H1 (cell line): ENCODE measurements at regions of chr1 and their contacts with region 1.

Region 1: DNA sequence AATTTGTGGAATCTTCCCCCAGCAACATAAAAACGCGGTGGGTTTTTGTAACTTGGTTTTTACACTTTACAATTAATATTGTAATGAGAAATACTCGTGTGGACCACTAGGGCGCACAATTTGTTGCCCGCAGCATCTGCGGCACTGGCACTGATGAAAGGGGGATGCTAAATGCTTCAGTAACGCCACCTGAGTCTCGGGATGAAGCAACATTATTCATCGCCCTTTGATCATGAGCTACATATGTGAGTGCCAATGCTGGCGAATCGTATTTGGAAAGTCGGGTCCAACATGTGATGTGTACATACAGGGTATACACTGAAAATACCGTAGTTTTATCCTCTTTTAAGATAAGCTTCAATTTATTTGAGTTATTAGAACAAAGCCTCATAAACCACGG is 34.2 kb upstream of the COX20 start:
- DNase-seq: no peak
- H3K4me3 ChIP-seq: no peak overlapping the region
- H3K27ac ChIP-seq: no peak overlapping the region
- H3K4me1 ChIP-seq: peaks cover 0 to 5% (median 0%) of the 10 kb centered on the region in 4 experiments; a peak in 1 of 7 replicates
- H3K27me3 ChIP-seq: no peaks in the 10 kb centered on the region
- CTCF ChIP-seq: peak; percentile 48 to 67 (median 61)
- EP300 ChIP-seq: no peak
- POLR2A ChIP-seq: no peak
- RAD21 ChIP-seq: peak; percentile 66 to 76

Region 2: DNA sequence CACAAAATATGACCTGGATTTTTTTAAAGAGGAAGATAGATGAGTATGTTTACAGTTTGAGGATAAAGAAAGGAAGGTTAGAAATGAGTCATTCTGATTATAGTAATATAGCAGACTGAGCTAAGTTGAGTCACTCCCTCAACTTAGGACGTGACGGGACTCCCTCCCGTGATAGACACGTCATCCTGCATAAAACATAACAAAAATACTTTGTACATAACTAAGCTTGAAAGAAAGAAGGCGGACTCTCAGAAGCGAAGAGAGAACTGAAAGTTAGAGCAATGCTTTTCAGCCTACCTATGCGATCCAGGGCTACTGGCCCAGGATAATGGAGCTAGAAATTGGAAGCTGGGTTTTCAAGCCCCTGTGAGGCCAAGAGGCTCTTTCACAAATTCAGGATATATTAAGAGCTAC is 201.3 kb before region 1 on chr1:
- CTCF ChIA-PET with region 1: interaction called, 64 read pairs
- POLR2A ChIA-PET with region 1: interaction called, 3 read pairs
- DNase-seq: no peak
- H3K4me3 ChIP-seq: no peak overlapping the region
- H3K27ac ChIP-seq: no peak overlapping the region
- H3K4me1 ChIP-seq: no peaks in the 10 kb centered on the region
- H3K27me3 ChIP-seq: no peaks in the 10 kb centered on the region
- CTCF ChIP-seq: no peak
- EP300 ChIP-seq: no peak
- POLR2A ChIP-seq: no peak
- RAD21 ChIP-seq: no peak

Region 3: GRCh38 chr1:244735404-244735803 is 65.8 kb before region 1 on chr1:
- CTCF ChIA-PET with region 1: interaction called, 19 read pairs
- POLR2A ChIA-PET with region 1: no interaction called
- DNase-seq: no peak
- H3K4me3 ChIP-seq: no peak overlapping the region
- H3K27ac ChIP-seq: peak overlapping the region; percentile 79
- H3K4me1 ChIP-seq: peaks cover 1 to 16% (median 6%) of the 10 kb centered on the region in 4 experiments
- H3K27me3 ChIP-seq: peaks cover 0 to 7% (median 3%) of the 10 kb centered on the region in 4 experiments; a peak in 5 of 7 replicates
- CTCF ChIP-seq: no peak
- EP300 ChIP-seq: no peak
- POLR2A ChIP-seq: no peak; a peak in 1 of 3 replicates
- RAD21 ChIP-seq: no peak

Region 4: DNA sequence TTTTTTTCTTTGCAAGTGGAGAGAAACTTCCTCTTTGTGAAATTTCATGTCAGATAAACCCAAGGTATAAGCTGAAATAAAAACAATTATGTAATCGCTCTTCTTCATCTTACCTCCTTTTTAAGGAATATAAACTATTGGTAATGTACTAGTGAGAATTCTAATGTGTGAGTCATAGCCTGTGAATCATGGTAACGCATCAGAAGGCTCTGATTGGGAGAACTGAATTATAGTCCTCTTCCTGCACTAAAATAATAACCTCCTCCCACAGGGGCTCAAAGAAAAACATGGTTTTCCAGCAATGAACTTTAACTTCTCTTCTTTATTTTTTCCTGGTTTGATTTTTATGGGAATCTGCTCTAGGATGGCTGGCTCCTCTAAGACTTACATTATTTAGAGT is 22.9 kb before region 1 on chr1:
- CTCF ChIA-PET with region 1: interaction called, 16 read pairs
- POLR2A ChIA-PET with region 1: no interaction called
- DNase-seq: no peak
- H3K4me3 ChIP-seq: no peak overlapping the region
- H3K27ac ChIP-seq: no peak overlapping the region
- H3K4me1 ChIP-seq: no peaks in the 10 kb centered on the region
- H3K27me3 ChIP-seq: no peaks in the 10 kb centered on the region
- CTCF ChIP-seq: no peak
- EP300 ChIP-seq: no peak
- POLR2A ChIP-seq: no peak
- RAD21 ChIP-seq: no peak

Region 5: DNA sequence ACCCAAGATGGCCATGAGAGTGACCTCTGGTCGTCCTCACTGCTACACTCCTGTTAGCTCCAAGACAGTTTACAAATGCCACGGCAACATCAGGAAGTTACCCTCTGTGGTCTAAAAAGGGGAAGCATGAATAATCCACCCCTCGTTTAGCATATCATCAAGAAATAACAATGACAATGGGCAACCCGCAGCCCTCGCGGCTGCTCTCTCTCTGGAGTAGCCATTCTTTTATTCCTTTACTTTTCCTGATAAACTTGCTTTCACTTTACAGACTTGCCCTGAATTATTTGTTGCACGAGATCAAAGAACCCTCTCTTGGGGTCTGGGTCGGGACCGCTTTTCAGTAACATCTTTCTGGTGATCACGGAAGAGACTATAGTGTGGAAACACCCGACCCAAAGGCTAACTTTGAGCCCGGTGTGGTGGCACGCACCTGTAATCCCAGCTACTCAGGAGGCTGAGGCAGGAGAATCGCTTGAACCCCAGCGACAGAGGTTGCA is 14.4 kb after region 1 on chr1:
- CTCF ChIA-PET with region 1: interaction called, 50 read pairs
- POLR2A ChIA-PET with region 1: interaction called, 17 read pairs
- DNase-seq: peak in 1 of 2 experiments; percentile 64
- H3K4me3 ChIP-seq: peak overlapping the region; percentile 16 to 59 (median 40)
- H3K27ac ChIP-seq: peak overlapping the region; percentile 69
- H3K4me1 ChIP-seq: peaks cover 1 to 11% (median 7%) of the 10 kb centered on the region in 4 experiments
- H3K27me3 ChIP-seq: no peaks in the 10 kb centered on the region
- CTCF ChIP-seq: no peak
- EP300 ChIP-seq: peak in 1 of 2 experiments; percentile 32; a peak in 1 of 3 replicates
- POLR2A ChIP-seq: peak; percentile 50 to 55
- RAD21 ChIP-seq: no peak

Region 6: GRCh38 chr1:244835276-244836134 is 34.3 kb after region 1 on chr1 and contains the start of gene COX20:
- CTCF ChIA-PET with region 1: interaction called, 10 read pairs
- POLR2A ChIA-PET with region 1: interaction called, 39 read pairs
- DNase-seq: peak; percentile 70 to 94
- H3K4me3 ChIP-seq: peak within 1 kb of the TSS; percentile 75 to 87 (median 81)
- H3K27ac ChIP-seq: peak within 1 kb of the TSS; percentile 100
- H3K4me1 ChIP-seq: peaks cover 0 to 3% (median under 1%) of the 10 kb centered on the region in 4 experiments; a peak in 4 of 7 replicates
- H3K27me3 ChIP-seq: no peaks in the 10 kb centered on the region
- CTCF ChIP-seq: no peak
- EP300 ChIP-seq: no peak; a peak in 1 of 3 replicates
- POLR2A ChIP-seq: peak; percentile 66 to 94
- RAD21 ChIP-seq: peak in 1 of 2 experiments; percentile 12; a peak in 1 of 4 replicates
- total RNA-seq, gene COX20: 28.8 and 33.6 TPM in 2 replicates

Region 7: DNA sequence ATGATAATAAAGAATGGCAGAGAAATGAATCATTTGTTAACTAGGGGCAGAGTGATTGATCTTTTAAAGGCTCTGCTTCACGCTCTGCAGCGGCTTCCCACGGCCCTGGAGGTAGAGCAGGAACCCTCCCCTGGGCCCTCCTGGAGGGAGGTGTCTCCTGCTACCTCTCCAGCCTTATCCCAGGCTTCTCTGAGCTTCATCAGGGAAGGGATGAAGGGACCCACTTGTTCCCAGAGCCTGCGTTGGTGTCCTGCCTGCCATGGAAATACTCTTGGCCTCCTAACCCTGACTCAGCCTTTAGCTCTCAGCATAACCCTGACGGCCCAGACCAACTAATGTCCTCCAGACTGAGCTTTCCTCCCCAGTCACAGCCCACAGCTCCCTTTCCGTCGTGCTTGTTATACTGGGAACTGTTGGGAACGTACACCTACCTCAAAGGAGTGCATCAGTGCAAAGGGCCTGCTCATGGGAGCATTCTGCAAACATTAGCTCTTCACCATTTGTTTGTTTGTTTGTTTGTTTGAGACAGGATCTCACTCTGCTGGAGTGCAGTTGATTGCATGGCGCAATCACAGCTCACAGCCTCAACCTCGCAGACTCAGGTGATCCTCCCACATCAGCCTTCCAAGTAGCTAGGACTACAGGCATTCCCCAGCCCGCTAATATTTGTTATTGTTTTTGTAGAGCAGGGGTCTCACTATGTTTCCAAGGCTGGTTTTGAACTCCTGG is 80.5 kb after region 1 on chr1:
- CTCF ChIA-PET with region 1: no interaction called
- POLR2A ChIA-PET with region 1: no interaction called
- DNase-seq: no peak
- H3K4me3 ChIP-seq: no peak overlapping the region
- H3K27ac ChIP-seq: no peak overlapping the region
- H3K4me1 ChIP-seq: peaks cover 0 to 4% (median 0%) of the 10 kb centered on the region in 4 experiments; a peak in 1 of 7 replicates
- H3K27me3 ChIP-seq: no peaks in the 10 kb centered on the region
- CTCF ChIP-seq: no peak
- EP300 ChIP-seq: no peak
- POLR2A ChIP-seq: no peak
- RAD21 ChIP-seq: no peak

Region 8: DNA sequence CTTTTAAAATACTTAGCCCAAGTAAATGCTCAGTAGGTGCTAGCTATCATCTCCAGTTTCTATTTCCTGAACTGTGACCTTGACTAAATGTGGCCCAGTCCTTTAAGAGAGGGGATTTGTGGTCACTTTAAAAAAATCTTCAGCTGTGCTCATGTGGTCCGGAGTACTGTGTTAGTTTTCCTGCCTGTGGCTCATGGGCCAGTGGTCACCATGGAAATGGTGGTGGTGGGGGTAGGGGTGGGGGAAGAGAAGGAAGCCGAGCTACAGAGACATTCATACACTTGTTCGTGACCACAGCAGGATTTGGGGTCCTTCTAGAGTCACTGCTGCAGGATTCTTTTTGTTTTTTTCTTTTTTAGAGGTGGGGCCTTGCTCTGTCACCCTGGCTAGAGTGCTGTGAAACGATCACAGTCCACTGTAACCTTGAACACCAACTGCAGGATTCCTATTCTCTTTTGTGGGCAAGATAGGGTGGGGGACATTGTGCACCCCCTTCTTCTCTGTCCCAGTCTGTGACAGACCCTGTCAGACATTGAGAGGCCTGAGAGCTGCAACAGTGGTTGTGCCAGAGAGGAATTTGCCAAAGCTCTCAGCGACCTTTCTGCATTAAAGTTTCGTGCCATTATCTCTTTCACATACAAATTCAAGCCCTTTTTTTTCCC is 379.4 kb after region 1 on chr1:
- CTCF ChIA-PET with region 1: no interaction called
- POLR2A ChIA-PET with region 1: no interaction called
- DNase-seq: no peak
- H3K4me3 ChIP-seq: no peak overlapping the region
- H3K27ac ChIP-seq: no peak overlapping the region
- H3K4me1 ChIP-seq: peaks cover 5 to 7% (median 6%) of the 10 kb centered on the region in 4 experiments; a peak in 6 of 7 replicates
- H3K27me3 ChIP-seq: no peaks in the 10 kb centered on the region
- CTCF ChIP-seq: no peak
- EP300 ChIP-seq: no peak
- POLR2A ChIP-seq: no peak
- RAD21 ChIP-seq: no peak